ENCODE measurements at regions of chr21 and their contacts with region 1.

Region 1: DNA sequence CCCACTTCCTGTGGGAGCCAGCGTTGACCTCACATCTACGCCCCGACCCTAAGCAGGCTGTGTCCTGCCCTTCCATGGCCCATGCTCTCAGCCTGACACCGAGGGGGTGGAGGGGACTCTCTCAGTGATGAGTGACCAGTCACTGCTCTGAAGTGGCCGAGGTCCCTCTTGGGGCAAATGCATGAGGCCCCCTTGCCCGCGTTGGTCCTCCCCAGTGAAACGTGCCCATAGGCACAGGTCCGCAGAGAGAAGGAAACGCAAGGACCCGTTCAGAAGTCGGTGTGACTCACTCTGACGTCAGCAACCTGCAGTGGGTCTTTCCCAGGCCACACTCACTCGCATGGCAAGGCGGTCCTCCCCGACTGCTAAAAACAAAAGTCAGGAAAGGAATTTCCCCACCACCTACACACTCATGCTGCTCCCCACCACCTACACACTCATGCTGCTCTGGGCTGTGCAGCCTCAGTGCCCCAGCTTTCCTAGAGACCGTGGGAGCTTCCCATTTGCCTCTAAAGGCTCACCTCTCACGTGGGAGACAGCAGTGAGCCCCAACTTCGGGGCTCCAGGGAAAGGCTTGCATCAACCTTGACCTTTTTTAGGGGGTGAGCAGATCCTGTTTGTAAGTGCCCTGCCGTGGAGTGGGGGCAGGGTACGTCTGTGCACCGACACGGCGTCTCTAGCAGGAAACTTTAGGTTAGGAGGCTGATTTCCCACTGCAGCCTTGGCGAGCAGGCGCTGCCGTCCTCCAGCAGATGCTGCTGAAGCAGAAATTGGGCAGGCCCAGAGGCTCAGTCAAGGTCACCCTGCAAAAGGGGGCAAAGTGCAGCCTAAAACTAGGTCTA is 11.4 kb downstream of the UBASH3A start:
- DNase-seq: peak; percentile 62
- ATAC-seq: peak; percentile 86
- H3K4me3 Mint-ChIP-seq: peak overlapping the region; percentile 70
- H3K27ac Mint-ChIP-seq: peak overlapping the region; percentile 84
- H3K4me1 Mint-ChIP-seq: peaks cover 38% of the 10 kb centered on the region
- H3K27me3 Mint-ChIP-seq: peaks cover 4% of the 10 kb centered on the region
- CTCF ChIP-seq: no peak

Region 2: DNA sequence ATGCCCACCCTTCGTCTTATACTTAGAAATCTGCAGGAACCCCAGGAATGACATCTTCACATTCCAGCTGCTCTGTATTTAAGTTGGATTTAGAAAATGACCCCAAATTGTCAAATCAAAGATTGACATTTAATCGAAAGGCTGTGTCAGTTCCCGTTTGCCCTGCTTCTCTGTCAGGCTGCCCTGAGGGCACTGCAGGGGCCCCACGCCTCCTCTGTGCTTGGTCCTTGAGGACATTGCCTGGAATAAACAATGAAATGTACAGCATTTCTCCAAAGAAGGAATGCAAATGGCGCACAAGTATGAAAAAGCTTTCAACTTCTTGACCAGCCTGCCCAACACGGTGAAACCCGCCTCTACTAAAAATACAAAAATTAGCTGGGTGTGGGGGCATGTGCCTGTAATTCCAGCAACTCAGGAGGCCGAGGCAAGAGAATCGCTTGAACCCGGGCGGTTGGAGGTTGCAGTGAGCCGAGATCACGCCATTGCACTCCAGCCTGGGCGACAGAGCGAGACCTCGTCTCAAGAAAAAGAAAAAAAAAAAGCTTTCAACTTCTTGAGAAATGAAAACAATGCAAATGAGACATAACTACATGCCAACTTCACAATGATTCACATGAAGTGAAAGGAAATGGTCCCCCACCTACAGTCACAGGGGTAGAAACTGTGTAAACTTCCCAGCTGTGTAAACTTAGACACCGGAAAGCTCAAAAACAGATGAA is 22.3 kb before region 1 on chr21:
- CTCF ChIA-PET with region 1: no interaction called
- POLR2A ChIA-PET with region 1: interaction called, 10 read pairs
- intact Hi-C with region 1: loop called (anchors 2 kb)
- DNase-seq: no peak
- ATAC-seq: peak; percentile 83
- H3K4me3 Mint-ChIP-seq: peak overlapping the region; percentile 22
- H3K27ac Mint-ChIP-seq: peak overlapping the region; percentile 4
- H3K4me1 Mint-ChIP-seq: peaks cover 34% of the 10 kb centered on the region
- H3K27me3 Mint-ChIP-seq: peaks cover 7% of the 10 kb centered on the region
- CTCF ChIP-seq: no peak

Region 3: DNA sequence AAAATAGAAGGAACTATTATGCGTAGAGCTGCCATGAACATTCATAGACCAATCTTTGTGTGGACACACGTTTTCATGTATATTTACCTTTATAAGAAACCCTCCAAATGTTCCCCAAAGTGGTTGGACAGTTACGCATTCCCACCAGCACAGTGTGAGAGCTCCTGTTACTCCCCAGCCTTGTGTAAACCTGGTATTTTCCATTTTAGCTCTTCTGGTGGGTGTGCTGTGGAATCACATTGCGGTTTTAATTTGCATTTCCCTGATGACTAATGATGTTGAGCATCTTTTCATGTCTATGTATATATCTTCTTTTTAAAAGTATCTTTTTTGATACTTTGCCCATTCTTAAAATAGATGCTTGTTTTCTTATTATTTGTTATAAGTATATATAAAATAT is 14.6 kb before region 1 on chr21:
- CTCF ChIA-PET with region 1: no interaction called
- POLR2A ChIA-PET with region 1: interaction called, 10 read pairs
- intact Hi-C with region 1: loop called (anchors 2 kb)
- DNase-seq: no peak
- ATAC-seq: peak; percentile 42
- H3K4me3 Mint-ChIP-seq: no peak overlapping the region
- H3K27ac Mint-ChIP-seq: no peak overlapping the region
- H3K4me1 Mint-ChIP-seq: peaks cover 20% of the 10 kb centered on the region
- H3K27me3 Mint-ChIP-seq: peaks cover 4% of the 10 kb centered on the region
- CTCF ChIP-seq: no peak

Region 4: GRCh38 chr21:42460391-42461204 is 45.4 kb after region 1 on chr21:
- CTCF ChIA-PET with region 1: no interaction called
- POLR2A ChIA-PET with region 1: no interaction called
- intact Hi-C with region 1: loop called (anchors 1 kb)
- DNase-seq: peak; percentile 62
- ATAC-seq: peak; percentile 60
- H3K4me3 Mint-ChIP-seq: peak overlapping the region; percentile 78
- H3K27ac Mint-ChIP-seq: peak overlapping the region; percentile 98
- H3K4me1 Mint-ChIP-seq: peaks cover 65% of the 10 kb centered on the region
- H3K27me3 Mint-ChIP-seq: no peaks in the 10 kb centered on the region
- CTCF ChIP-seq: no peak

Region 5: DNA sequence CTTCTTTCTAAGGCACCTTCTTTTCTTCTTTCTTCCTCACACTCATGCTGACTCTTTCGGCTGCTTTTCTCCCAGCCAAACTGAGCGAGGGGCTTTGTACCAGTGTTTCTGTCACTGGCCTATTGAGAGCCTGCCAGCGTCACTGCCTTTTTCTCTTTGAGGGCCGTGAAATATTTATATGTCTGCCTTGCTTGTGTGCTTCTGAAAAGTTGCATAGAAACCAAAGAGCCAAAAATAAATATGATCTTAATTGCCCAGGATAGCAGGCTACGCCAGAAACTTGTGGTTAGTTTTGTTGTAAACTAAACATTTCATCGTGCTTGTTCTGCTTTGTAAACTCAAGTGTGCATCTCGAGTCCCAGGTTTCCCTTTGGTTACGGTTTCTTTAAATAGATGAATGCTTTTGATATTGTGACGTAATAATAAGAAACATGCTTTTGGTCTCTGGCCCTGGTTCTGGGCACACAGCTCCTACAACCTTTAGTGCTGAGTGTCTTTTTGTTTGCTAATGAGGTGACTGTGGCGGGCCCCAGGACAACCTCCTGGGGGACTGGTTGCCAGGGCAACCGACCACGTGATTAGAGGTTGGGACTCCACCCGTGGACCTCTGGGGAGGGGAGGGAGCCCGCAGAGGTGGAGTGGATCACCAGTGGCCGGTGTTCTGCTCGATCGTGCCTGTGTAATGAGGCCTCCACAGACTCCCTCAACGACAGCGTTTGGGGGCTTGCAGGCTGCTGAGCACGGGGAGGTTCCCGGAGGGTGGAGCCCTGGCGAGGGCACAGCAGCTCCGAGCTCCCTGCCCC is 109.4 kb after region 1 on chr21:
- CTCF ChIA-PET with region 1: no interaction called
- POLR2A ChIA-PET with region 1: no interaction called
- intact Hi-C with region 1: no loop called
- DNase-seq: peak; percentile 90
- ATAC-seq: peak; percentile 83
- H3K4me3 Mint-ChIP-seq: peak overlapping the region; percentile 78
- H3K27ac Mint-ChIP-seq: peak overlapping the region; percentile 95
- H3K4me1 Mint-ChIP-seq: peaks cover 87% of the 10 kb centered on the region
- H3K27me3 Mint-ChIP-seq: no peaks in the 10 kb centered on the region
- CTCF ChIP-seq: no peak

Measured in activated B cell treated with CpG ODN at 0.5 μM for 24 hours (primary cell).